B cell (primary cell): ENCODE measurements at regions of chr3 and their contacts with region 1.

Region 1: GRCh38 chr3:4290272-4290893 is 12.8 kb upstream of the SETMAR start:
- DNase-seq: peak; percentile 67
- ATAC-seq: peak; percentile 62
- H3K4me3 ChIP-seq: no peak overlapping the region
- H3K4me3 Mint-ChIP-seq: no peak overlapping the region
- H3K27ac ChIP-seq: no peak overlapping the region
- H3K27ac Mint-ChIP-seq: no peak overlapping the region
- H3K4me1 ChIP-seq: no peaks in the 10 kb centered on the region
- H3K4me1 Mint-ChIP-seq: no peaks in the 10 kb centered on the region
- H3K27me3 ChIP-seq: no peaks in the 10 kb centered on the region
- H3K27me3 Mint-ChIP-seq: peaks cover 3% of the 10 kb centered on the region
- CTCF ChIP-seq: peak; percentile 99

Region 2: DNA sequence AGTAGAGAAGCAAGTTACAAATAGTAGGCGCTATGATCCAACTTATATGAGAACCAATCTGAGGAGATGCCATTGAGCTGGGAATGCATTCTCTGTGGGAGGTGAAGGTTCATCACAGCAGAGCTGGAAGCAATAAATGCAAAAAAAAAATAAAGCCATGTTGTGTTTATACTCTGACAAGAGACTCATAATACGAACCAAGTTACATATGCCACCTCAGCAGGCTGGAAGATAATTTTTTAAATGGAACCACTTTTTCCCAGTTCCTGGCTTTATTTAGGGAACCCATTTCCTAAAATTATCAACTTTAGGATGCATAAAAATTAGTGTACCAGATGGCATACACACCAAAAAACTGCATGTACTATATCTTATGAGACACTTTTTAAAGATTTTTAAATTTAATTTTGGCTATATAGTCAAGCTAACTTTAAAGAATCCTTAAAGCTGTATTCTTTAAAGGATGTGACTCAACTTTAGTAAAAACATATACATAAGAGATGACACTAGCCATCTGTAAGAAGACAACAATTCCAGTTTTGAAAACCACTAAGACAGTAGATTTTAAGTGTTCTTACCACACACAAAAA is 10.8 kb before region 1 on chr3:
- CTCF ChIA-PET with region 1: interaction called, 14 read pairs
- POLR2A ChIA-PET with region 1: no interaction called
- intact Hi-C with region 1: no loop called
- DNase-seq: no peak
- ATAC-seq: no peak
- H3K4me3 ChIP-seq: no peak overlapping the region
- H3K4me3 Mint-ChIP-seq: no peak overlapping the region
- H3K27ac ChIP-seq: no peak overlapping the region
- H3K27ac Mint-ChIP-seq: no peak overlapping the region
- H3K4me1 ChIP-seq: no peaks in the 10 kb centered on the region
- H3K4me1 Mint-ChIP-seq: no peaks in the 10 kb centered on the region
- H3K27me3 ChIP-seq: no peaks in the 10 kb centered on the region
- H3K27me3 Mint-ChIP-seq: peaks cover 3% of the 10 kb centered on the region
- CTCF ChIP-seq: no peak